Activated naive CD4-positive, alpha-beta T cell treated with anti-CD3 and anti-CD28 coated beads for 36 hours (primary cell): ENCODE measurements at regions of chr17 and their contacts with region 1.

Region 1: GRCh38 chr17:40598663-40599467 is 33.6 kb upstream of the CCR7 start:
- DNase-seq: peak; percentile 90
- H3K4me3 Mint-ChIP-seq: peak overlapping the region; percentile 67
- H3K27ac Mint-ChIP-seq: peak overlapping the region; percentile 98
- H3K4me1 Mint-ChIP-seq: peaks cover 95% of the 10 kb centered on the region
- H3K27me3 Mint-ChIP-seq: no peaks in the 10 kb centered on the region

Region 2: GRCh38 chr17:40340880-40341807 is 257.7 kb before region 1 on chr17:
- CTCF ChIA-PET with region 1: no interaction called
- intact Hi-C with region 1: no loop called
- DNase-seq: peak; percentile 91
- H3K4me3 Mint-ChIP-seq: peak overlapping the region; percentile 38
- H3K27ac Mint-ChIP-seq: peak overlapping the region; percentile 61
- H3K4me1 Mint-ChIP-seq: peaks cover 71% of the 10 kb centered on the region
- H3K27me3 Mint-ChIP-seq: no peaks in the 10 kb centered on the region

Region 3: DNA sequence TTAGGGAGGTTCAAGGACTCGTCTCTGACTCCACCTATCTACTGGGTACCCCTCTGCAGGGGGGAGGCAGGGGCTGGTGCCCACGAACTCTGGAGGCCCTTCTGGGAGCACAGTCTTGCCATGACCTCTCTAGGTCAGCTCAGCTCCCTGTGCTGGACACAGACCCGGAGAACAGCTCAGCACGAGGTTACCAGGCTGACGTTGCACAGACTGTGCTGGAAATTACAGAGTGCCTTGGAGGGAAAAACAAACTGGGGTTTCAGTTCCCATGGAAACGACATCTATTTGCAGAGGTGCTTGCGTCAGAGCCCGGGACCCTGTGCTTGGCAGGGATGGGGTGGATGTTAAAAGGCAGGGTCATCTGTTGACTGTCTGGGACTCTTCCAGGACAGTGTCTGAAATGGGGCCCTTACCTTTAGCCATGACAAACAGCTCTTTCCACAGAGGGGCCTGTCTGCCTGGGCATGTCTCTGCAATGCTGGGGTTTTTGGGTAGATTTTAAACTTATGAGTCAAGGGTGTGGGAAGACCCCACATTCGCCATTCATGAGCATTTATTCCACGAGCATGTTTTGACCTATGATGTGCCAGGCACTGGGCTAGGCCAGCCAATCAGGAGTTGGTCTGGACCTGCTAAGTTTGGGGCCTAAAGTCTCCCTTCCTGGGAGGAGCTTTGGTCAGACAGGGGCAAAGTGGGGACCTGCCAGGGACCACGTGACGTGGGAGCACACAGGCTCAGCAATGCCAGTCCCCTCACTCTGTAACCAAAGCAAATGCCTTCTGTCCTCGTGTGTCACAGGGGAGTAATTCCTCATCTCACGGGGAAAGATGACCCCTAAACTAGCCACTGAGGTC is 56.1 kb before region 1 on chr17:
- CTCF ChIA-PET with region 1: no interaction called
- intact Hi-C with region 1: loop called (anchors 2 kb)
- DNase-seq: peak; percentile 89
- H3K4me3 Mint-ChIP-seq: peak overlapping the region; percentile 66
- H3K27ac Mint-ChIP-seq: peak overlapping the region; percentile 96
- H3K4me1 Mint-ChIP-seq: peaks cover 83% of the 10 kb centered on the region
- H3K27me3 Mint-ChIP-seq: no peaks in the 10 kb centered on the region

Region 4: DNA sequence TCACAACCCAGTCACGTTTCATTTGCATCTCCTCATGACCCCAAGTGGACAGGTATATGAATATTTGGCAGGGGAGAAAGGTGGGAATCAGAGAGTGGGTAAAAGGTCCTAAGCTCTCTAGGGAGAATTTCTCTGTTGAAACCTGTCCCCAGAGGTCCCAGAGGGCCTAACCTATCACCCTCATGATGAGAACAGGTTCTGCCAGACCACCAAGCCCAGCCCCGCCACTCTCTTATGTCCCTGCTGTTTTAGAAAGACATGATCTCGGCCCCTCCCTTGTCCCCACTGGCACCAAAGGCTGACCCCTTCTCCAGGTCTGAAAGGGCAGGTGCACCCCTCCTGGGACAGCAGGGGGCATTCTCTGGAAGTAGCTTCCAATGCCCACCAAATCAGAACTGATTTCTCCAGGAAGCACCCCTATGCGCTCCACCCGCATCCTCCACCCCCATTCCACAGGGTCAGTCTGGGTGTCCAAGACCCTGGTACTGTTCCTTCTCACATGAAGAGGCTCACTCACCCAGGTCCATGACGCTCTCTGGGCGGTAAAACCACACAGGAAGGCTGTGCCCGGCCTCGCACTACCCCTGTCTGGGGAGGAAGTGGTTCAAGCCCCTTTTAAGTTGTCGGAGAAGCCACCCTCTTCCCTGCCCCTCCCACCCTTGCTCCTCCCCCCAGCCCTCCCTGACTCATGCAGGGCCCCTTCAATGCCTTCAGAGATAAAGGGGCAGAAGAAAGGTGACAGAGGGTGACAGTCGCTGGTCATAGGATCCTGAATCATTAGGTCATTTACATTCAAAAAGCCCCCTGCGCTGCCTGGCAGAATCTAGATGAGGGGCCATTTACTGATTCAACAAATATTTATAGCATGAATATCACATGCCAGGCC is 33.7 kb before region 1 on chr17 and contains the start of gene CCR7:
- CTCF ChIA-PET with region 1: interaction called, 90 read pairs
- intact Hi-C with region 1: loop called (anchors 1 kb)
- DNase-seq: peak; percentile 92
- H3K4me3 Mint-ChIP-seq: peak within 1 kb of the TSS; percentile 96
- H3K27ac Mint-ChIP-seq: peak within 1 kb of the TSS; percentile 100
- H3K4me1 Mint-ChIP-seq: peaks cover 56% of the 10 kb centered on the region
- H3K27me3 Mint-ChIP-seq: no peaks in the 10 kb centered on the region
- total RNA-seq, gene CCR7: 150 to 156 TPM